Uterus (tissue), 4 donors: ENCODE measurements at regions of chr10 and their contacts with region 1.

Region 1: DNA sequence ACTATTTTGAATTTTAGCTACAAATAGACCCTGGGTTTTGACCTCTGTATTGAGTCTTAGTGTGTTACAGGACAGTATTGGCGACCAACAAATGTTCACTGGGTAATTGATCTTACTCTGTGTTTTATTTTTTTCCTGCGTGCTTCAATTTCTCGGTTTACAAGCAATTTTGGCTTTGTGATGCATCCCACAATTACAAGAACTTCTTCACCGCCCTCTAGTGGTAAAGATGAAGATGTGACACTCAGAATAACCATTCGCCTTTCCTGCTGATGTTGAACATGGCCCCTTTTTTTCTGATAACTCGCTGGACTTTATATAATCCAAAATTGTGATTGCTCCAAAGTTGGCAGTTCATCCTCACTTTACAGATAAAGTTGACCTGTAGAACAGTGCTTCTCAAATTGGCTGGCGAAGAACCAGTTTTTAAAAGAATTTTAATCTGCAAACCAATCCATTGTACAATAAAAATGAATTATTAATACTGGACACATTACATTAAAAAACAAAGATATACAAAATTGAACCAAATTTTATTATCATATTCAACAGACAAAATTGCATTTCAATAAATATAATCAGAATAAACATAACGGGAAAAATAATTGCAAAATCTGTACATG is 20.2 kb upstream of the SMC3 start:
- DNase-seq: no peak
- H3K4me3 ChIP-seq: no peak overlapping the region
- H3K27ac ChIP-seq: no peak overlapping the region
- H3K4me1 ChIP-seq: no peaks in the 10 kb centered on the region
- H3K27me3 ChIP-seq: no peaks in the 10 kb centered on the region
- CTCF ChIP-seq: peak; percentile 77 to 90 (median 84)
- POLR2A ChIP-seq: no peak

Region 2: GRCh38 chr10:110311357-110311949 is 235.8 kb before region 1 on chr10:
- intact Hi-C with region 1: loop called (anchors 10 kb)
- DNase-seq: peak; percentile 35 to 52
- H3K4me3 ChIP-seq: no peak overlapping the region
- H3K27ac ChIP-seq: no peak overlapping the region
- H3K4me1 ChIP-seq: no peaks in the 10 kb centered on the region
- H3K27me3 ChIP-seq: no peaks in the 10 kb centered on the region
- CTCF ChIP-seq: peak; percentile 61 to 75 (median 73)
- POLR2A ChIP-seq: no peak

Region 3: DNA sequence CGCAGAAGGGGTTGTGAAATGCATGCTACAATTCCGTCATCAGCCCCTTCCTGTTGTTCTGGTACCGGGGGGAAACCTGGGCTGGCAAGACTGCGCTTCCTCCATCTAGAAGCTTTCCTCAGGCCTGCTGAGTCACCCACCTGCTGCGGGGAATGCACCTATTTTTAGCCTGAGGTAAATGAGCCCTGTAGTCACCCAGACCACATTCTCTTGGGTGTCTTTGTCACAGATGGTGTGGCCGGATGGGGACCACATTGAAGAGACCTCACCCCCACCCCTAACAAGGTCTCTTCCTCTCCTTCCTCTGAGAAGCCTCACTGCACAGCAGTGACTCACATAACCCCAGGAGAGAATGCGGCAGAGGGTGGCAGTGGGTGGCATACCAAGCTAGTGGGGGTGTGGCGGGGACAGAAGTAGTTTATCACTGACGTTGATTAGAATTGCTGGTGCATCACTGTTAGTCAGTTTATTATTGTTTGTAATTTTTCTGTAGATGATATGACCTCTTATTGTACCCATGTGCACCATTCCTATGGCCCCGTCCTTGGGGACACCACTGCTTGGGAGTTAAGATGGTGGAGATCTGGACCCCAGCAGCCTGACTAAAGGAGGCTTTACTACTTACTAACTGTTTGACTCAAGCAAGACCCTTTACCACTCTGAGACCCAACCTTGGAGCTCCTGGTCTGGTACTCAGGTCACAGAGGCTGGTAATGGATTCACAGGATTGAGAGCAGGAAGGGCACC is 132.5 kb before region 1 on chr10:
- intact Hi-C with region 1: no loop called
- DNase-seq: no peak
- H3K4me3 ChIP-seq: no peak overlapping the region
- H3K27ac ChIP-seq: no peak overlapping the region
- H3K4me1 ChIP-seq: no peaks in the 10 kb centered on the region
- H3K27me3 ChIP-seq: no peaks in the 10 kb centered on the region
- CTCF ChIP-seq: no peak
- POLR2A ChIP-seq: no peak